ENCODE measurements at regions of chr16 and their contacts with region 1.

Region 1: GRCh38 chr16:10509534-10510025 is 70.8 kb downstream of the EMP2 start:
- DNase-seq: peak; percentile 30 to 47
- ATAC-seq: peak; percentile 79 to 95
- H3K4me3 ChIP-seq: no peak overlapping the region
- H3K27ac ChIP-seq: no peak overlapping the region
- H3K4me1 ChIP-seq: peaks cover 9 to 11% of the 10 kb centered on the region in 2 donors
- H3K27me3 ChIP-seq: no peaks in the 10 kb centered on the region
- CTCF ChIP-seq: peak; percentile 63 to 81 (median 74)
- POLR2A ChIP-seq: no peak

Region 2: GRCh38 chr16:8567750-8568617 is 1941.6 kb before region 1 on chr16:
- in situ Hi-C with region 1: loop called in 3 of 4 experiments (anchors 25 kb)
- intact Hi-C with region 1: loop called (anchors 5 kb)
- DNase-seq: peak; percentile 29 to 43
- ATAC-seq: peak; percentile 81 to 93
- H3K4me3 ChIP-seq: no peak overlapping the region
- H3K27ac ChIP-seq: no peak overlapping the region
- H3K4me1 ChIP-seq: no peaks in the 10 kb centered on the region
- H3K27me3 ChIP-seq: peaks cover 0 to 16% (median 7%) of the 10 kb centered on the region in 3 donors
- CTCF ChIP-seq: peak; percentile 88 to 95 (median 91)
- POLR2A ChIP-seq: no peak

Region 3: DNA sequence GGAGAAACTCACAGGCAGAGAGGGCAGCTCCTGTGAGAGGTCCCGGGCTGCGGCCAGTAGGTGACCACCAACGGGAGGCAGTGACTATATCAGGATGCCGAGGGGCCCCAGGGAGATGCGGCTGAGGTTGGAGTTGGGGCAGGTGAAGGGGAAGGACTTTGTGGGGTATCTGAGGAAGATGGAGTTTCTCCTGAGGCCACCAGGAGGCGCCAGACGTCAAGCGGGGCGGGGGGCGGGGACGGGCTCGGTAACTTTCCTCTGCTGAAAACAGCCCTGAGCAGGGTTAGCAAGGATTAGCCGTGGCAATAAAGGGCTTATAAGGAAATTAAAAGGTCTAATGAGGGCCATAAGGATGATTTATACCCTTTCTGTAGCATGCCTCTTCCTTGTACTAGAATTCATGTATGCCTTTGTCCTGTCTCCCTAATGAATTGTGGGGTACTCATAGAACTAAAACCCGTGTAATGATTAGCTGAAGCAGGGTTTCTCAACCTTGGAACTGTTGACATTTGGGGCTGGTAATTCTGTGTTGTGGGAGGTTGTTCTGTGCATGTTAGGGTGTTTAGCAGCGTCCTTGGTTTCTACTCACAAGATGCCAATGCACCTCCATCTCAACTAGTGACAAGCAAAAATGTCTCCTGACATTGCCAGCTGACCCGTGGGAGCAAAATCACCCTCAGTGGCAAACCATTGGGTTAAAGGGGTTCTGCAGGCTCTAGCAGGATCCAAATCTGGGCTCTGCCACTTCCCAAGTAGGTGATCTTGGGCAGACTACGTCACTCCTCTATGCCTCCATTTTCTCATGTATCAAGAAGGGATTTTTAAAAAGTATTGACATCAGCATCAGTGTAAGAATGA is 252.6 kb before region 1 on chr16:
- in situ Hi-C with region 1: loop called (anchors 5 to 10 kb)
- intact Hi-C with region 1: loop called (anchors 1 kb)
- DNase-seq: peak in 1 of 2 donors; percentile 12
- ATAC-seq: peak in 1 of 2 donors; percentile 58
- H3K4me3 ChIP-seq: no peak overlapping the region
- H3K27ac ChIP-seq: no peak overlapping the region
- H3K4me1 ChIP-seq: no peaks in the 10 kb centered on the region
- H3K27me3 ChIP-seq: peaks cover 0 to 3% (median 3%) of the 10 kb centered on the region in 3 donors
- CTCF ChIP-seq: peak; percentile 24 to 77 (median 65)
- POLR2A ChIP-seq: no peak

Region 4: DNA sequence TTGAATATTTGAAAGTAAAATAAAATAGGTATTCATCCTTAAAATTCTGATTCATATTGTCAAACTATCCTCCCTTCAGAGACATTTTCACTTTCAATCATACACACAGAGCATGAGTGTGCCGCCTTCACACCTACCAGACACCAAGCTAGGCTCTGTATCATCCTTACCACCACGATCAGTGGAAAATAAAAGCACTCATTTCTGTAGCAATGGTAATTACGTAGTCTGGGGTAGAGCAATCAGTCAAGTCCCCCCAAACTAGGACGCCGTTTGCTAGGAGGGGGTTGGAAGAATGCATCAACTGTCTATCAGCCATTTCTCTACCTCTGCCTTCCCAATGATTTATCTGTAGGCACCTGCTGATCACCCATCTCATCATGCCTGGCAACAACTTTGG is 242.8 kb before region 1 on chr16:
- in situ Hi-C with region 1: loop called in 1 of 4 experiments (anchors 10 kb)
- intact Hi-C with region 1: no loop called
- DNase-seq: no peak
- ATAC-seq: no peak
- H3K4me3 ChIP-seq: no peak overlapping the region
- H3K27ac ChIP-seq: no peak overlapping the region
- H3K4me1 ChIP-seq: no peaks in the 10 kb centered on the region
- H3K27me3 ChIP-seq: no peaks in the 10 kb centered on the region
- CTCF ChIP-seq: no peak
- POLR2A ChIP-seq: no peak

Region 5: GRCh38 chr16:10579965-10580882 is 70.6 kb after region 1 on chr16 and contains the start of gene EMP2:
- in situ Hi-C with region 1: loop called in 1 of 4 experiments (anchors 10 kb)
- intact Hi-C with region 1: loop called (anchors 1 kb)
- DNase-seq: peak; percentile 23 to 54
- ATAC-seq: peak; percentile 41 to 49
- H3K4me3 ChIP-seq: peak within 1 kb of the TSS; percentile 80 to 96 (median 88)
- H3K27ac ChIP-seq: peak within 1 kb of the TSS; percentile 87 to 93 (median 88)
- H3K4me1 ChIP-seq: peaks cover 39 to 50% of the 10 kb centered on the region in 2 donors
- H3K27me3 ChIP-seq: no peaks in the 10 kb centered on the region
- CTCF ChIP-seq: peak; percentile 33 to 67 (median 59)
- POLR2A ChIP-seq: peak; percentile 74 to 83
- total RNA-seq, gene EMP2: 7.9 to 13.5 (median 11.7) TPM

Region 6: GRCh38 chr16:10594367-10594944 is 84.9 kb after region 1 on chr16:
- in situ Hi-C with region 1: no loop called
- intact Hi-C with region 1: no loop called
- DNase-seq: no peak
- ATAC-seq: no peak
- H3K4me3 ChIP-seq: no peak overlapping the region
- H3K27ac ChIP-seq: no peak overlapping the region
- H3K4me1 ChIP-seq: no peaks in the 10 kb centered on the region
- H3K27me3 ChIP-seq: no peaks in the 10 kb centered on the region
- CTCF ChIP-seq: no peak
- POLR2A ChIP-seq: no peak

Region 7: DNA sequence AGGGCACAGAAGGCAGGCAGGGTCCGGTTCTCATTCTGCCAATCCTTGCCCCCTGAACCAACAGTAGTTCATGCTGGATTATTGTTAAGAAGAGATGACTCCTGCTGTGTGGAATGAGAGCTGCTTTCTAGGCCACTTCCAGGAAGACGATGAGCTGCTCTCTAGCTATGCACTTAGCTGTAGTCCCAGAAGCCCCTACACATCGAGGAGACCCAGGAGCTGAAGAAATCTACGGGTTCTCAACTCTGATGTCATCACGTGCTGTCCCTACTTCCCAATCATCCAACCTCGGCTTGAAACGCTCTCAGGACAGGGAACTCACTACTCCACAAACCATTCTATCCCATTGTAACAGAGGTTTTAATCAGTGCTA is 99.8 kb after region 1 on chr16:
- in situ Hi-C with region 1: no loop called
- intact Hi-C with region 1: no loop called
- DNase-seq: no peak
- ATAC-seq: no peak
- H3K4me3 ChIP-seq: no peak overlapping the region
- H3K27ac ChIP-seq: no peak overlapping the region
- H3K4me1 ChIP-seq: peaks cover 0 to 6% of the 10 kb centered on the region in 2 donors
- H3K27me3 ChIP-seq: no peaks in the 10 kb centered on the region
- CTCF ChIP-seq: no peak
- POLR2A ChIP-seq: no peak

Region 8: DNA sequence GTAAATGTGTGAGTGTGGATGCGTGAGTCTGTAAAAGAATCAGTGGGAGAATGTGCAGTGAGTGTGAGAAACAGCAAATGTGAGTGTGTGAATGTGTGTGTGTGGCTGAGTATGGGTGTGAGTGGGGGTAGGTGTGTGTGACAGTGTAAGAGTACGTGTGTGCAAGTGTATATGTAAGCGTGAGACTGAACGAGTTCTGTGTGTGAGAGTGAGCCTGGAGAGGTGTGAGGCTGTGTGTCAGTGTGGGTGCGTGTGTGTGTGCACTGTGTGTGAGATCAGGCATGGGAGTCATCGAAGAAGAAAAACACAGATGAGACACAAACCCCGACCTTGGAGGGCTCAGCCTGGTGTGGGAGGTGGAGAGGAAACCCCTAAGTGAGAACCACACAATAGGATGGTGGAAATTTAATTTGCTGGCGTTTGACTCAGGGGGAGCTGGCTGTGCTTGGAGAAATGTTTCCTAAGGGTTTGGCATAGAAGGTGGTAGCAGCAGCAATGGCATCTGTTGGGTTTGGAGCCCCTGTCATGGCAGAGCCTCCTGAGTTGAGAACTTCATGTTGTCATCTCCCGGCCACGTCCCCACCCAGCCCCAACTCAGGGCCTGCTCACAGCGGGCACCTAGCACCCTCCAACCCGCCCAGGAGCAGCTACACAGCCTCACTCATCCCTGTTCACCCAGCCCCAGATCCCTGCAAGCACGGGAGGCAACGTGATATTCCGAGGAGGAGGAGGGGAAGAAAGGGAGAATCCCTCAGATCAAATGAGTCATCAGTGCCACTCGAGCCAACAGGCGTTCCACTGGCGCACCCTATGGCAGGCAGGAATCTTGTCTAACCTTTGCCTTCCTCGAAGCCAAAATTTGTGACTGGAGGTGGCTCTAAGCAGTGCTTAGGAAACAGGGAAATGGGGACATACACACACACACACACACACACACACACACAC is 219.8 kb after region 1 on chr16:
- in situ Hi-C with region 1: loop called in 1 of 4 experiments (anchors 5 kb)
- intact Hi-C with region 1: no loop called
- DNase-seq: peak; percentile 76 to 82
- ATAC-seq: peak; percentile 98 to 99
- H3K4me3 ChIP-seq: no peak overlapping the region
- H3K27ac ChIP-seq: peak overlapping the region in 1 of 4 donors; percentile 67
- H3K4me1 ChIP-seq: peaks cover 7 to 13% of the 10 kb centered on the region in 2 donors
- H3K27me3 ChIP-seq: no peaks in the 10 kb centered on the region
- CTCF ChIP-seq: no peak
- POLR2A ChIP-seq: no peak

Region 9: DNA sequence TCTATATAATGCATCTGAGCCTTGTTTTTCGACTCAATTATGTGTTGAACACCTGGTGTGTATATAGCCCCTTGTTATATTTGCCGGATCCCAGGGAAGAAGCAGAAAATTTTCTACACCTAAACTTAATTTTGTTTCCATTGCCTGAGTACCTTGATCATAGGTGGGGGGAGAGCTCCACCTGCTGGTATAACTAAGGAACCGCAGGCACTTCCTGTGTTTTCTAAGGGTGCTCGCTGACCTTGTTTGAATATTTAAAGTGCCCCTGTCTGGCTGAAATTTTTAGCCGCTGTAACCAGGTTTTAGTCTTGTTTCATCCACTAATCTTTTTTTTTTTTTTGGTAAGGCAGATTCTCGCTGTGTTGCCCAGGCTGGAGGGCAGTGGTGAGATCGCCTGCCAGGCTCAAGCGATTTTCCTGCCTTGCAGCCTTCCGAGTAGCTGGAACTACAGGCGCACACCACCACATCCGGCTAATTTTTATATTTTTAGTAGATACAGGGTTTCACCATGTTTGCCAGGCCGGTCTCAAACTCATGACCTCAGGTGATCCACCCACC is 227.6 kb after region 1 on chr16:
- in situ Hi-C with region 1: loop called in 3 of 4 experiments (anchors 5 kb)
- intact Hi-C with region 1: loop called (anchors 1 kb)
- DNase-seq: peak; percentile 36 to 63
- ATAC-seq: peak; percentile 49
- H3K4me3 ChIP-seq: peak overlapping the region in 2 of 4 donors; percentile 21 to 44
- H3K27ac ChIP-seq: peak overlapping the region; percentile 84 to 95 (median 88)
- H3K4me1 ChIP-seq: peaks cover 16 to 22% of the 10 kb centered on the region in 2 donors
- H3K27me3 ChIP-seq: no peaks in the 10 kb centered on the region
- CTCF ChIP-seq: peak; percentile 93 to 96 (median 93)
- POLR2A ChIP-seq: no peak

Measured in gastrocnemius medialis (tissue), 4 donors.